OCI-LY7 (cell line): ENCODE measurements at regions of chr1 and their contacts with region 1.

Region 1: DNA sequence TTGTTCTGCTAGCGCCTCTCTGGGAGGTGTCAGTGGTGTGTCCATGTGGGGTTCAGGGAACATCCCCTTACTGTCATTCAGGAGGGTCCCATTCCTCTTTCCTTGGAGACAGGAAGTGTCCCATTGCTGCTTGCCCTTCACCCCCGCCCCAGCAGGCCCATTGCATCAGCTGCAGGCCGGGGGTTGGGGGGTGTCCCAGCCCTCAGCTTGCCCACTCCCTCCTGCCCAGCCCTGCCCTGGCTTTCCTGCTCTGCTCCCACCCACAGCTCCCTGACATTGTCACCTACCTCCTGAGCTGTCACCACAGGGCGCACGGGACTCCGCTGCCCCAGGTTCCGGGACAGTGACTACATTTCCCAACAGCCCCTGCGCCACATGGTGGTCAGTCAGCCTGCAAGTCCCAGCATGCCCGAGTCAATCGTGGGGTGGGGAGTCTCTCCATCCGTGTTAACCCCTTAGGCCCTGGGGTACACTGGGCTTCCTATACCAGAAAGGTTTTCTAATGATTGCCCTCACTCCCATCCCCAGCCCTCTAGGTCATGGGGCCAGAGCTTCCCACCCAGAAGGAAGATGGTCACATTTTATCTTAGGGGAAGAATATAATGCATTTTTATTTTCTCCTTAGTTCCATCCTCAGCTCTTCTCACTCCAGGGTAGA is at the start of gene INPP5B:
- DNase-seq: peak; percentile 93
- H3K4me3 ChIP-seq: peak within 1 kb of the TSS; percentile 75
- H3K27ac ChIP-seq: peak within 1 kb of the TSS; percentile 38
- H3K4me1 ChIP-seq: peaks cover 44% of the 10 kb centered on the region
- CTCF ChIP-seq: no peak
- total RNA-seq, gene INPP5B: 47.8 and 49.7 TPM in 2 replicates

Region 2: GRCh38 chr1:37922767-37923550 is 23.9 kb before region 1 on chr1:
- CTCF ChIA-PET with region 1: interaction called, 3 read pairs
- POLR2A ChIA-PET with region 1: interaction called, 27 read pairs
- intact Hi-C with region 1: no loop called
- DNase-seq: peak; percentile 93
- H3K4me3 ChIP-seq: peak overlapping the region; percentile 37
- H3K27ac ChIP-seq: peak overlapping the region; percentile 98
- H3K4me1 ChIP-seq: peaks cover 77% of the 10 kb centered on the region
- CTCF ChIP-seq: peak; percentile 45

Region 3: DNA sequence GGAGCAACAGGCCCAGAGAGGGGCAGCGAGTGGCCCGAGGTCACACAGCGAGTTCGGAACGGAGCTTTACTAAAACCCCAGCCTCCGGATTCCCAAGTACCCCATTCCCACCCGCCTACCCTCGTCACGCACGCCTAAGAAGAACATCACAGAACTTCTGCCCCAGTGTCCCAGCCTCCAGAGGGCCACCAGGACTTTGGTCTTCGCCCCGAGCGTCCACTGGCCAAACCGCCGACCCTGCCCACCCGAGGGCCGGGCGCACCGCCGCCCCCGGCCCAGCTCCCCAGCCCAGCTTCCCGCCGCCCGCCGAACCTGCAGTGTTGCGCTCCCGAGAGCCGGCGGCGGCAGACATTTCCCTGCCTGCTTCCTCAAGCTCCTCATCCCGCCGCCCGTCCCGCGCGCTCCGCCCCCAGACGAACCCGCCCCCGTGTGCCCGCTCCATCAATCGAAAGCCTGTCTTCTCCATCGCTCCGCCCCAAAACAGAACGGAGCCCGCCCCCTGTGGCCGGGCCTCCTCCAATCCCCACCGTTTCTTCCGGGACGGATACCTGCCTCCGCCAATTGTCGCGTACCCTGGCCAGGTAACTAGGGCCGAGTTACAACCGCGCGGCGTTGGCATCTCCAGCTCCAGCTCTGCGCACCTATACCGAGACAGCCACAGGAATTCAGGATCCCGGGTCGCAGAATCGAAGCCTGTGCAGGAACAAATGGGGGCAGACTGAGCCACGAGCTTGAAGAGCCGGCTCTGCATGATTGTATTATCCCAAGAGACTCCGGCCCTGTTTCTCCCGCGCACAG is 15.3 kb before region 1 on chr1:
- CTCF ChIA-PET with region 1: interaction called, 3 read pairs
- POLR2A ChIA-PET with region 1: interaction called, 27 read pairs
- intact Hi-C with region 1: loop called (anchors 1 kb)
- DNase-seq: peak; percentile 97
- H3K4me3 ChIP-seq: peak overlapping the region; percentile 89
- H3K27ac ChIP-seq: peak overlapping the region; percentile 64
- H3K4me1 ChIP-seq: peaks cover 47% of the 10 kb centered on the region
- CTCF ChIP-seq: no peak

Region 4: DNA sequence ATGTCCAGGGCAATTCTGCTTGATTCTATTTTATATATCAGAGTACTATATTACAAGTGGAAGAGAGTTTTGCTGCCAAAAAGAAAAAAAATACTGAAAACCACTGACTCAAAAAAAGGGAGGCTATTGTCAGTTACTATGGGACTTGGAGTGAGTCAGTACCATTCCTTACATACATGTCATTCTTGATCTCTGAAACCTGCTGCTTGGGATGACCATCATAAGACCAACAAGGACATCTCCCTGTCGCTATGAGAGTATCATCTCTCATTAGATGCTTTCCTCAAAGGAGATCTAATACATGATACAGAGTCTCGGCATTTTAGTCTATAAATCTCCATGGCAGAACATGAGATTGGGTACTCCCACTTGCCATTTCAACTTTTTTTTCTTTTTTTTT is 11.9 kb after region 1 on chr1:
- CTCF ChIA-PET with region 1: no interaction called
- POLR2A ChIA-PET with region 1: interaction called, 10 read pairs
- intact Hi-C with region 1: no loop called
- DNase-seq: no peak
- H3K4me3 ChIP-seq: no peak overlapping the region
- H3K27ac ChIP-seq: no peak overlapping the region
- H3K4me1 ChIP-seq: no peaks in the 10 kb centered on the region
- CTCF ChIP-seq: no peak